ENCODE measurements at regions of chr21 and their contacts with region 1.

Region 1: DNA sequence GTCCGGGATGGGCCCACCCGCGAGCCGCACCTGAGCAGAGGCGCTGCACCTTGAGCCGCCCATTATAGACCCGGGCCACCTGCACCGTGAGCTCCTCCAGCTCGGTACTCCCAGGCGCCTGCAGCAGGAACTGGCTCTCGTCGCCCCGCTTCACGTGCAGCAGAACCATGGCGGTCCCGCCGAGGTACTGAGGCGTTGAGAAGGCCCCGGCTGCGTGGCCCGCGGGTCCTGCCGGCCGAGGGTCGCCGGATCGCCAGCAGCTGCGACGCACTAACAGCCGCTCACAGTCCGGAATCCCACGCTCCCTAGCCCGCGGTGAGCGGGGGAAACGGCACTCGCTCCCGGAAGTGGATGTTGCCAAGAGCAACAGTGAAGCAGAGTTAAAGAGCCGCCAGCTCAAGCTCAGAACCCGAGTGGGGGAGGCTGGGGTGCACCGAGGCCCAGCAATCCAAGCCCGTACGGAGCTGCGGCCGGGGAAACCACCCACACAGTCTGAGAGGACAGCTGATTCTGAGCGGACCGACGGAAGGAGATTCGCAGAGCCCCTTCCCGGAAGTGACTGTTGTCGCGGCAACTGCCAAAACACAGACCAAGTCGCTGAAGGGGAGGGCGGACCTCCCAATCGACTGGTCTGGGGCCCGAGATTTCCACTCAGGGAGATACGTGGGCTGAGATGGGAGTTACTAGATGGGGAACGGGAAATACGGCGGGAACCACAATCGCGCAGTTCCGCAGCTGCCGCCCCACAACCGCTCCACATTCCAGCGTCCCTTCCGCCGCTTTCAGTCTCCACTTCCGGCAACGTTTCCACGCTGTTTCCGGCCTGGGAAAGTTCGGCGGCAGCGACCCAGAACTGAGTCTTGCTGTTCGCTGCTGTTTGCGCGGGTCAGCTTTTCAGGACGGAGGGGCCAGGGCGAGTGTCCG is at the start of gene CFAP298:
- DNase-seq: peak; percentile 96
- ATAC-seq: peak; percentile 86
- H3K4me3 ChIP-seq: peak within 1 kb of the TSS; percentile 85 to 95 (median 88)
- H3K4me3 Mint-ChIP-seq: peak within 1 kb of the TSS; percentile 98
- H3K27ac ChIP-seq: peak within 1 kb of the TSS; percentile 78 to 92
- H3K27ac Mint-ChIP-seq: peak within 1 kb of the TSS; percentile 97
- H3K4me1 ChIP-seq: peaks cover 3 to 21% of the 10 kb centered on the region in 2 donors
- H3K4me1 Mint-ChIP-seq: peaks cover 7% of the 10 kb centered on the region
- H3K27me3 ChIP-seq: no peaks in the 10 kb centered on the region
- H3K27me3 Mint-ChIP-seq: peaks cover 3% of the 10 kb centered on the region
- CTCF ChIP-seq: no peak
- total RNA-seq, gene CFAP298: 29.2 and 29.4 TPM in 2 replicates

Region 2: DNA sequence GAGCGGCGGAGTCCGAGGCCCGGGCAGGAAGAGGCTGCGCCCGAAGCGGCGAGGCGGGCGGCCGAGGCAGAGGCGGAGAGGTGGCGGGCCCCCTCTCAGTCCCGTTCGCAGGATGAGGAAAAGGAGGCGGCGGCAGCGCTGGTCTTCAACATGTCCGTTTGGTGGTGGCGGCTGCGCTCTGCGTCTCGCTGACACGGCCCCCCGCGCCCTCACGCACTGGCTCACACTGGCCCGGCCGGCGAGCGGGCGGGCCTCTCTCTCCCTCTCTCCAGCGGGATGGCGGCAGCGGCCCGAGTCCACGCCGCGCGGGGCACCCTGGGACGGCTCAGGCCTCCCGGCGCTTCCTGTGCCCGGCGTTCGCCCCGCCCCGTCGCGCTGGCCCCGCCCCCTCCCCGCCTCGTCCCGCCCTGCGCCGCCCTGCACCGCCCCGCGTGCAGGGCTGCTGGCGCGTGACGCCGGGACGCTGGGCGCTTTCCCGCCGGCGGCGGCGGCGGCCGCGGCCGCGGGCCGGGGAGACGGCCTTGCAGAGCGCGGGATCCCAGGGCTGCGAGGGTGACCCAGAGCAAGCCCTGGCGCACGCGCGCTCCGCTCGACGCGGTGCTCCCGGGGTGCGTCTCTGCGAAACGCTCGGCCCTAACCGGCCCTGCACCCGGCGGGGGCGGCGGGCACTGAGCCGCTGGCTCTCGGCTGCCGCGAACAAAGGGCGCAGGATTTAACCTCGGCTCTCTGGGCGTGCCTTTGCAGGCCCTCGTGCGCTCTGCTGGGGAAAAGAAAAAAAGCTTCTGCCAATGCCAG is 880.3 kb before region 1 on chr21 and contains the start of gene SCAF4:
- CTCF ChIA-PET with region 1: no interaction called
- POLR2A ChIA-PET with region 1: no interaction called
- intact Hi-C with region 1: loop called (anchors 5 kb)
- DNase-seq: peak; percentile 90
- ATAC-seq: peak; percentile 82
- H3K4me3 ChIP-seq: peak within 1 kb of the TSS; percentile 51 to 89 (median 77)
- H3K4me3 Mint-ChIP-seq: no peak within 1 kb of the TSS
- H3K27ac ChIP-seq: peak within 1 kb of the TSS; percentile 79 to 89
- H3K27ac Mint-ChIP-seq: peak within 1 kb of the TSS; percentile 91
- H3K4me1 ChIP-seq: peaks cover 65 to 68% of the 10 kb centered on the region in 2 donors
- H3K4me1 Mint-ChIP-seq: peaks cover 30% of the 10 kb centered on the region
- H3K27me3 ChIP-seq: no peaks in the 10 kb centered on the region
- H3K27me3 Mint-ChIP-seq: no peaks in the 10 kb centered on the region
- CTCF ChIP-seq: no peak
- total RNA-seq, gene SCAF4: 110 and 116 TPM in 2 replicates

Region 3: DNA sequence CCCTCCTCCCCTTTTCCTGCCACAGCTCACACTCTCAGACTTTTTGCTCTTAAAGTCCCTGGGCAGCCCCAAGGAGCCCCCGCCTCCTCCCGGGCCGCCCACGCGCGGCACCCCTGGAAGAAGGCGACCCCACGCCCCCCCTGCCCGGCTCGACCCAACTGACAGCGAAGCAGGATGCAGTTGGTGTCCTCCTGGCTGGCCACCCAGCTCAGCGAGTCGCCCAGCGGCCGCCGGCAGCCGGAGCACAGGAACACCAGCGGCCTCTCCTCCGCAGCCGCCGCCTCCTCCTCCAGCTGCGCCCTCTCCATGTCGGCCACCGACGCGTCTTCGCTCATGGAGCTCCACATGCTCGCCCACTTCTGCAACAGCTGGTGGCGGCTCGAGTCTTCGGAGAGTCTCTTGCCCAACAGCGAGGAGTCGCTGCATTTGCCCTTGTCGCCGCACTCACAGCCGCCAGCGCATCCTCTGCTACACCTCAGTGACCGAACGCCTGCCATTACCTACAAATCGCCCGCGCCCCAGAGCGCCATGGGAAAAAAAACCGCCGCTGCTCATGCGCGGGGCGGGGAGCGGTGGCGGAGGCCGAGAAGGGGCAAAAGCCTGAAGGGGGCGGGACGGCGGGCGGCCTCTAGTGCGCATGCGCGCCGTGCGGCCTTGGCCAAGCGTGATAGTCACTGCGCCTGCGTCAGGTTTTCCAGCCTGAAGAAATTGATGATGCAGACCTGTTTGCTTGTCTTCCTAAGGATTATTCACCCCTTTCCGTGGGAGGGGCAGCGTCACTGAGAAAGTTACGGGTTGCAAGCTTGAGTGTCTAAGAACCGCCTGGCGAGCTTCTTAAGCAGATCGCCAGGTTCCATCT is 333.6 kb before region 1 on chr21 and contains the start of gene MIS18A:
- CTCF ChIA-PET with region 1: no interaction called
- POLR2A ChIA-PET with region 1: no interaction called
- intact Hi-C with region 1: loop called (anchors 5 kb)
- DNase-seq: peak; percentile 97
- ATAC-seq: peak; percentile 97
- H3K4me3 ChIP-seq: peak within 1 kb of the TSS; percentile 70 to 86 (median 82)
- H3K4me3 Mint-ChIP-seq: peak within 1 kb of the TSS; percentile 100
- H3K27ac ChIP-seq: peak within 1 kb of the TSS; percentile 29 to 44
- H3K27ac Mint-ChIP-seq: peak within 1 kb of the TSS; percentile 91
- H3K4me1 ChIP-seq: peaks cover 16 to 22% of the 10 kb centered on the region in 2 donors
- H3K4me1 Mint-ChIP-seq: peaks cover 22% of the 10 kb centered on the region
- H3K27me3 ChIP-seq: no peaks in the 10 kb centered on the region
- H3K27me3 Mint-ChIP-seq: no peaks in the 10 kb centered on the region
- CTCF ChIP-seq: no peak
- total RNA-seq, gene MIS18A: 8.8 and 10.4 TPM in 2 replicates

Region 4: DNA sequence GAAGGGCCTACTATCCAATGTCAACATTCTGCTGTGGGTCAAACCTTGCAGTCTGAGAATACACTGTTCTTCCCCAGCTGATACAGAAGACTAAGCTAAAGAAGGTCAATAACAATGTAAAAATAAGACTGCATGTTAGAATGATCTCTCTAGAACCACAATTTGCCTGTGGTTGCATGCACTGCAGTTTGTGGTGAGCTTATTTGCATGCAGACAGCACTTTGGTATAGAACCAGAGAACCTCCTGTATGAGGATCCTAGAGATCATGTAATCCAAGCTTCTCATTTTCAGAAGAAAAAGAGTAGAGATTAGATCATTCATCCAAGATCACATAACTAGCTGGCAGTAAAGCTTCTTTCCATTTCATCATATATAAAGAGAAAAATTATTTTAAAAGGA is 99.7 kb after region 1 on chr21:
- CTCF ChIA-PET with region 1: no interaction called
- POLR2A ChIA-PET with region 1: no interaction called
- intact Hi-C with region 1: loop called (anchors 1 kb)
- DNase-seq: peak; percentile 88
- ATAC-seq: peak; percentile 96
- H3K4me3 ChIP-seq: peak overlapping the region in 1 of 5 experiments; percentile 0
- H3K4me3 Mint-ChIP-seq: peak overlapping the region; percentile 67
- H3K27ac ChIP-seq: no peak overlapping the region
- H3K27ac Mint-ChIP-seq: peak overlapping the region; percentile 61
- H3K4me1 ChIP-seq: peaks cover 22 to 30% of the 10 kb centered on the region in 2 donors
- H3K4me1 Mint-ChIP-seq: peaks cover 20% of the 10 kb centered on the region
- H3K27me3 ChIP-seq: peaks cover 2 to 60% (median 59%) of the 10 kb centered on the region in 4 experiments
- H3K27me3 Mint-ChIP-seq: peaks cover 52% of the 10 kb centered on the region
- CTCF ChIP-seq: no peak

Region 5: GRCh38 chr21:32770871-32771523 is 158.7 kb after region 1 on chr21:
- CTCF ChIA-PET with region 1: interaction called, 4 read pairs
- POLR2A ChIA-PET with region 1: interaction called, 4 read pairs
- intact Hi-C with region 1: loop called (anchors 1 kb)
- DNase-seq: no peak
- ATAC-seq: peak; percentile 40
- H3K4me3 ChIP-seq: peak overlapping the region; percentile 65 to 84 (median 78)
- H3K4me3 Mint-ChIP-seq: peak overlapping the region; percentile 96
- H3K27ac ChIP-seq: peak overlapping the region; percentile 48 to 77
- H3K27ac Mint-ChIP-seq: peak overlapping the region; percentile 93
- H3K4me1 ChIP-seq: peaks cover 12 to 19% of the 10 kb centered on the region in 2 donors
- H3K4me1 Mint-ChIP-seq: peaks cover 50% of the 10 kb centered on the region
- H3K27me3 ChIP-seq: no peaks in the 10 kb centered on the region
- H3K27me3 Mint-ChIP-seq: no peaks in the 10 kb centered on the region
- CTCF ChIP-seq: no peak

Region 6: DNA sequence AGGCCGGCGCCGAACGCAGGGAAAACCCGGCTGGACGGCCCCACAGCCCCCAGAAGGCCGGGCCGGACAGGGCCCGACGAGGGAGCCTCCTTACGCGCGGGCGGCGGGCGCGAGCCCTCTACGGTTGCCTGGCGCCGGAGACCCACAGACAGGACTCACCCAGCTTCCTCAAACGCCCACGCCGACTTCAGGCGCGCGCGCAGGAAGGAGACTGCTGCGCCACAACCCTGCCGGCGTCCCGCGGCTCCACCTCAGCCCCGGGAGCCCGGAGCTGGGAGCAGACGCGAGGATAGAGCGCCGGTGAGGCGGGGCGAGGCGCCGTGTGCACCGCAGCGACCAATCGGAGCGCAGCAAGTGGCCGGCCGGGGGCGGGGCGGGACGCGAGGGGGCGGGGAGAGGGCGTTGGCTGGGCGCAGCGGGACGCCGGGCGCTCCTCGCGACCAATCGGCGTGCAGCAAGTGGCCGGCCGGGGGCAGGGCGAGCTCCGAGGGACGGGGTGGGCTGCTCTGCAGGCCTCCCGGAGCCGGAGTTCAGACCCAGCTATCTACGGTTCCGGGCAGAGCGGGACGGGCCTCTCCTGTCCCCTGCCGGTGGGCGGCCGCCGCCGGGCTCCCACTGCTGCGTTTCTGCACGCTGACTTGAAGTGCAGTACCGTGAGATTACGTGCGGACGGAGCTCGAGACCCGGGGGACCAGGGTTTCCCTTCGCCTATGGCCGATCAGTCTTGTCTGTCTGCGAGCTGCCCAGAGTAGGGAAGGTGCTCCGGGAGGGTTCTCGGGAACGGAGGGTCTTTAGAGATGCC is 867.5 kb after region 1 on chr21 and contains the start of gene TMEM50B:
- CTCF ChIA-PET with region 1: no interaction called
- POLR2A ChIA-PET with region 1: no interaction called
- intact Hi-C with region 1: loop called (anchors 5 kb)
- DNase-seq: peak; percentile 96
- ATAC-seq: peak; percentile 85
- H3K4me3 ChIP-seq: peak within 1 kb of the TSS; percentile 70 to 91 (median 78)
- H3K4me3 Mint-ChIP-seq: peak within 1 kb of the TSS; percentile 94
- H3K27ac ChIP-seq: peak within 1 kb of the TSS; percentile 56 to 95
- H3K27ac Mint-ChIP-seq: peak within 1 kb of the TSS; percentile 95
- H3K4me1 ChIP-seq: peaks cover 12 to 14% of the 10 kb centered on the region in 2 donors
- H3K4me1 Mint-ChIP-seq: peaks cover 17% of the 10 kb centered on the region
- H3K27me3 ChIP-seq: no peaks in the 10 kb centered on the region
- H3K27me3 Mint-ChIP-seq: no peaks in the 10 kb centered on the region
- CTCF ChIP-seq: peak; percentile 40
- total RNA-seq, gene TMEM50B: 79.0 and 79.5 TPM in 2 replicates

Region 7: DNA sequence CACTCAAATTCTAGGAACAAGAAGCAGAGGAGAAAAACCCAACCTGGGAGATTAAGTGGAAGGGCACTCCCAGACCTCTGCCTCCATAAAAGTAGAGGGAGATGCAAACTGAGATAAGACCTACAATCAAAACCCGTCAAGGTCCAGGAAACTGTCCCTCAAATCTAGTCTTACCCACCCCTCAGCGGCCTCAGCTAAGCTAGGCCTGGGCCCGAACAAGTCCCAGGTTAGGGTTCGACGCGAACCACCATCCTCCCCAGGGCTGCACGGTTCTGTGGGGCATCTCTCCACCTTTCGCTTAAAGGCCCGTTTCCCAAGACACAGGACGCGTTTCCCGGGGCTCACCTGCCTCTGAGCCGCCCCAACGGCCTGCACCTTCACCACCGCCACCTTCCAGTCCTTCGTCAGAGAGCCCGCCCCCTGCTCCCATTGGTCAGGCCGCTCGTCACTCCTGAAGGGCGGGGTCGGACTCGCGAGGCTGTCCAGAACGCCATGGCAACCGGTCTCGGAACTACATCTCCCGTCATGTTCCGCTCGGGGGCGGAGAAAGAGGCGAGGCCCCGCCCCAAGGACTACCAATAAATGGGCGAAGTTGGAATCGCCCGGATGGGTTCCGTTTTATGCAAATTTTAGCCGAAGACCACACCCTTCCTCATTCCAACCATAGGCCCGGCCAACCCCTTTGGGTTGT is 1029.1 kb after region 1 on chr21 and contains the start of gene CRYZL1:
- CTCF ChIA-PET with region 1: no interaction called
- POLR2A ChIA-PET with region 1: no interaction called
- intact Hi-C with region 1: loop called (anchors 2 kb)
- DNase-seq: peak; percentile 100
- ATAC-seq: peak; percentile 77
- H3K4me3 ChIP-seq: peak within 1 kb of the TSS; percentile 71 to 91 (median 79)
- H3K4me3 Mint-ChIP-seq: peak within 1 kb of the TSS; percentile 94
- H3K27ac ChIP-seq: peak within 1 kb of the TSS; percentile 84 to 90
- H3K27ac Mint-ChIP-seq: peak within 1 kb of the TSS; percentile 97
- H3K4me1 ChIP-seq: peaks cover 16 to 20% of the 10 kb centered on the region in 2 donors
- H3K4me1 Mint-ChIP-seq: peaks cover 27% of the 10 kb centered on the region
- H3K27me3 ChIP-seq: peaks cover 0 to 27% (median 19%) of the 10 kb centered on the region in 4 experiments
- H3K27me3 Mint-ChIP-seq: peaks cover 22% of the 10 kb centered on the region
- CTCF ChIP-seq: no peak
- total RNA-seq, gene CRYZL1: 60.6 and 66.9 TPM in 2 replicates

Measured in B cell (primary cell).